Mammary epithelial cell (primary cell): ENCODE measurements at regions of chr1 and their contacts with region 1.

Region 1: DNA sequence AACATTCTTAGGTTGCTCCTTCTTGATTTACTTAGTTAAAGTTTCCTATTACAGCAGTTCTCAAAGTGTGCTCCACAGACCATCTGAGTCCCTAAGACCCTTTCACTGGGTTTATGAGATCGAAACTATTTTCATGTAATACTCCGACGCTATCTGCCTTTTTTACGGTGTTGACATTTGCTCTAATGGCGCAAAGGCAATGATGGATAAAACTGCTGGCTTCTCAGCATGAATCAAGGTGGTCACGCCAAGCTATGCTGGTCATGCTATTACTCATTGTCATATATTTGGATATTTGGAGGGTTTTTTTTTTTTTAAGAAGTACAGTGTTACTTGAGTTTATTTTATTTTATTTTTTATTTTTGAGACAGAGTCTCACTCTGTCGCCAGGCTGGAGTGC is 235.1 kb downstream of the KIF26B start:
- DNase-seq: no peak
- H3K4me3 ChIP-seq: no peak overlapping the region
- H3K27ac ChIP-seq: no peak overlapping the region
- H3K4me1 ChIP-seq: no peaks in the 10 kb centered on the region
- H3K27me3 ChIP-seq: no peaks in the 10 kb centered on the region
- CTCF ChIP-seq: no peak

Region 2: GRCh38 chr1:245188403-245188802 is 201.5 kb before region 1 on chr1:
- CTCF ChIA-PET with region 1: no interaction called
- dilution Hi-C with region 1: no loop called
- in situ Hi-C with region 1: no loop called
- intact Hi-C with region 1: no loop called
- DNase-seq: no peak
- H3K4me3 ChIP-seq: no peak overlapping the region
- H3K27ac ChIP-seq: no peak overlapping the region
- H3K4me1 ChIP-seq: no peaks in the 10 kb centered on the region
- H3K27me3 ChIP-seq: no peaks in the 10 kb centered on the region
- CTCF ChIP-seq: no peak

Region 3: GRCh38 chr1:245512980-245513578 is 123.2 kb after region 1 on chr1:
- CTCF ChIA-PET with region 1: interaction called, 17 read pairs
- dilution Hi-C with region 1: no loop called
- in situ Hi-C with region 1: no loop called
- intact Hi-C with region 1: no loop called
- DNase-seq: no peak
- H3K4me3 ChIP-seq: no peak overlapping the region
- H3K27ac ChIP-seq: no peak overlapping the region
- H3K4me1 ChIP-seq: no peaks in the 10 kb centered on the region
- H3K27me3 ChIP-seq: no peaks in the 10 kb centered on the region
- CTCF ChIP-seq: no peak